ENCODE measurements at regions of chr7 and their contacts with region 1.

Region 1: DNA sequence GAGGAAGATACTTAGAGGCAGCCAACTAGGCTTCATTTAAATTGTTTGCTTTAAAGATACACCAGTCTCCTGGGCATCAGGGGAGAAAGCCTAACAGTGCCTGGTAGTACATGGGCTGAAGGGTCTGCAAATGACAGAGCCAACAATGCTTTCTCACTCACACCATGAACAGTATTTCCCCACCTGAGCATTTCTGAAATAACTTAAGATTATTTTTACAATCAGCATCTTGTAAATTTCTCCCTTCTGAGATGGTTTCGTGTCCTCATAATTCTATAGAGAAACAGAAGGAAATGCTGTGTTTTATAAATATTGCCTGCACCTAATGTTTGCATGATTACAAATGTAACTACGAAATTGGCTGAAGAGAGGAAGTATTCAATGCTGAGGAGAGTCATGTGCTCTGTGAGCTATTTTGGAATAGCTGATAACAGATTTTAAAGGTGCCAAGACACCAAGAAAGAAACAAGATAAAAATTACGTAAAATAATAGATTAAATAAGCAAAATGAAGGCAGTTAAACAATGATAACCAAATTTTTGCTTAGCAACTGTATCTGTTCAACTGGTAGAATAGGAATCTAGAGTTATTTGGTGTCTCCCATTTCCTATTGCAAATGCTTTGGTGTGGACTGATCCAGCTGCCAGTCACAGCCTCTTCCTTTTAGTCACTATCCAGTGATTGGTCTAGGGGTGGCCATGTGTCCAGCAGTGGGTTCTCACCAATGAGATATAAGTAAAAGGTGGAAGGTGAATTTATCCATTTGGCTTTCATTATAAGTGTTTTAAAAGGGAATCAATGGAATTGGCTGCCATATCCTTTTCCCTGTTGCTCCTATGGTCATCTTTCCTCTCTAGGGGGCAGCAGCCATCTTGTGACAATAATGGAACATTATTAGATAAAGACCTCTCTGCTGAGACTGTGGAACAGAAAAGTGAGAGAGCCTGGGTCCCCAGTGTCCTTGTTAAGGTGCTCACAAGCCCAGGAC is 167.9 kb upstream of the SLC26A5 start:
- DNase-seq: no peak
- H3K4me3 ChIP-seq: no peak overlapping the region
- CTCF ChIP-seq: peak; percentile 20

Region 2: DNA sequence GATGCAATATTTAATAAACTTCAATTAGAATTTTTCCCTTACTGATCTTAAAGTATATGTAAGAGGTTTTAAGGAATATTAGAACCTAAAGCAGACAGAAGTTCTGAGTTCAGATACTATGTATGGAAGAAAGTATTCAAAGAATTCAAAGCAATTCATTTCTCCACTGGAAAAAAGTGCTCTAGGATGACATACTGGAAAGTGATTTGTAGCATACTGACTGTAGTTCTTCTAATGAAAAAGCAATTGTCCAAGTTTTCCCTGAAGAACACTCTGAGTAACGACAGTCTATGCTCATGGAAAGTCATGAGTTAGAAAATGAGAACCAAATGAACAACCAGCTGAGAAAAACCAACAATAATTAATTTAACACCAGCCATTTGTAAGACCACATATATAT is 12.8 kb after region 1 on chr7:
- CTCF ChIA-PET with region 1: interaction called, 36 read pairs
- POLR2A ChIA-PET with region 1: no interaction called
- DNase-seq: no peak
- H3K4me3 ChIP-seq: no peak overlapping the region
- CTCF ChIP-seq: no peak

Region 3: GRCh38 chr7:103718482-103719415 is 104.8 kb after region 1 on chr7:
- CTCF ChIA-PET with region 1: no interaction called
- POLR2A ChIA-PET with region 1: no interaction called
- DNase-seq: no peak
- H3K4me3 ChIP-seq: no peak overlapping the region
- CTCF ChIP-seq: no peak

Region 4: GRCh38 chr7:103752997-103753396 is 139.0 kb after region 1 on chr7:
- CTCF ChIA-PET with region 1: interaction called, 13 read pairs
- POLR2A ChIA-PET with region 1: no interaction called
- DNase-seq: no peak
- H3K4me3 ChIP-seq: no peak overlapping the region
- CTCF ChIP-seq: peak; percentile 11

Measured in AG04449 (cell line).